A673 (cell line): ENCODE measurements at regions of chr14 and their contacts with region 1.

Region 1: DNA sequence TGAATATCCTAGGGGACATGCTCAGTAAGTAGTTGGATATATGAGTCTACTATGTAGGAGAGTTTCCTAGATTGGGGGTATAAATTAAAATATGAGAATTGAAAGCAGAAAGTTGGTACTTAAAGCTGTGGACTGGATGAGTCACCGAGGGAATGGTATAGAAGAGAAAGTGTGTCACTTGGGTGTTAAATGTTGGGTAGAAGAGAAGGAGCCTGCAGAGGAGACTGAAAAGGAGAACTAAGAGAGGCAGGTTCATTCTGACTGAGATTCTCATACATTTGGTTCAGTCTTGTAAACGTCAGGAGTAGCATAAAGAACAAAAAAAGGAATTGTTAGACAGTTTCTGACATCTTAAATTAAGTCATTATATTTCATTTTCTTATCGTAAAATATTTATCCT is 19.9 kb downstream of the LRRC9 start:
- DNase-seq: no peak
- H3K4me3 ChIP-seq: no peak overlapping the region
- H3K27ac ChIP-seq: no peak overlapping the region
- H3K4me1 ChIP-seq: no peaks in the 10 kb centered on the region
- H3K27me3 ChIP-seq: no peaks in the 10 kb centered on the region
- CTCF ChIP-seq: no peak

Region 2: DNA sequence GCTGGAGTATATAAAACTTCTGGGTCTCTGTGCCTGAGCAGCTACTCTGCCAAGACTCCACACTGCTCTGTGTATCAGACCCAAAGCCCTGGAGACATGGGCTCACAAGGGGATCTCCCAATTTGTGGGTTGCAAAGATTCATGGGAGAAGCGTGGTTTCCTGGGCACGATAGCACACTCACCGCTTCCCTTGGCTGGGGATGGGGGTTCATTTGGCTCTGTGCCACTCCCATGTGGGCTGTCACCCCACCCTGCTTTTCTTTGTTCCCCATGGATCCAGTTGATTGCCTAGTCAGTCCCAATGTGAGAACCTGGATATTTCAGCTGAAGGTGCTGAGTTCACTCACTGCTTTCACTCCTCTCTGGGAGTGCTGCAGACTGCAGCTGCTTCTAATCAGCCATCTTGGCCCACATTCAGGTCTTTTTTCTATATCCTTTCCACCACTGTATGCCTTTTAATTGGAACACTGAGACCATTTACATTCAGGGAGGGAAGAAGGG is 111.9 kb after region 1 on chr14:
- CTCF ChIA-PET with region 1: no interaction called
- POLR2A ChIA-PET with region 1: no interaction called
- intact Hi-C with region 1: no loop called
- DNase-seq: peak; percentile 2
- H3K4me3 ChIP-seq: no peak overlapping the region
- H3K27ac ChIP-seq: no peak overlapping the region
- H3K4me1 ChIP-seq: peaks cover 6% of the 10 kb centered on the region
- H3K27me3 ChIP-seq: no peaks in the 10 kb centered on the region
- CTCF ChIP-seq: no peak

Region 3: DNA sequence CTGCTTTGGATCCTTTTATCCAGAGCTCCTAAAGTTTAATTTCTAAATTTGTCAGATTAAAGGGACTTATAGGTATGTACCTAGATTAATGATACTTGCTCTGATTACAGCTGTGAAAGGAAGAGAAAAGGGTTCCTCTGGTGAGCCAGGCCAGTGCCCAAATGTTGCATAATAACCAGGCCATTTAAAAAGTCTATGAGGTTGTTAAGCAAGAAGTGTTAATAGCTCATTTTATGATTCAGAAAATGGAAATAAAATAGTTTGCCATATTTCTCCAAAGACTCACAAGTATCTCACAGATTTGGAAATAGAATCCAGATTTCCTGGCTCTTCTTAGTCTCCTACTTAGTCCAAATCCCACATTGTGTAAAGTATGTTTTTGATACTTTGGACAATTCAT is 1108.8 kb after region 1 on chr14:
- CTCF ChIA-PET with region 1: no interaction called
- POLR2A ChIA-PET with region 1: no interaction called
- intact Hi-C with region 1: loop called (anchors 10 kb)
- DNase-seq: no peak
- H3K4me3 ChIP-seq: no peak overlapping the region
- H3K27ac ChIP-seq: no peak overlapping the region
- H3K4me1 ChIP-seq: peaks cover 24% of the 10 kb centered on the region
- H3K27me3 ChIP-seq: no peaks in the 10 kb centered on the region
- CTCF ChIP-seq: no peak